T-cell (primary cell): ENCODE measurements at regions of chr11 and their contacts with region 1.

Region 1: GRCh38 chr11:128985880-128986279 is 43.2 kb upstream of the TP53AIP1 start:
- DNase-seq: no peak
- ATAC-seq: no peak
- H3K4me3 ChIP-seq: no peak overlapping the region
- H3K4me3 Mint-ChIP-seq: no peak overlapping the region
- H3K27ac ChIP-seq: no peak overlapping the region
- H3K27ac Mint-ChIP-seq: no peak overlapping the region
- H3K4me1 ChIP-seq: no peaks in the 10 kb centered on the region
- H3K4me1 Mint-ChIP-seq: peaks cover 0 to 4% (median 0%) of the 10 kb centered on the region in 3 donors
- H3K27me3 ChIP-seq: no peaks in the 10 kb centered on the region
- H3K27me3 Mint-ChIP-seq: no peaks in the 10 kb centered on the region

Region 2: GRCh38 chr11:127843483-127844396 is 1142.1 kb before region 1 on chr11:
- CTCF ChIA-PET with region 1: interaction called in 1 of 2 experiments, 13 read pairs
- POLR2A ChIA-PET with region 1: no interaction called
- DNase-seq: peak in 32 of 35 experiments; percentile 0 to 63 (median 24)
- ATAC-seq: peak in 1 of 4 experiments; percentile 45
- H3K4me3 ChIP-seq: no peak overlapping the region
- H3K4me3 Mint-ChIP-seq: no peak overlapping the region
- H3K27ac ChIP-seq: no peak overlapping the region
- H3K27ac Mint-ChIP-seq: no peak overlapping the region
- H3K4me1 ChIP-seq: no peaks in the 10 kb centered on the region
- H3K4me1 Mint-ChIP-seq: no peaks in the 10 kb centered on the region
- H3K27me3 ChIP-seq: peaks cover 0 to 7% of the 10 kb centered on the region in 2 experiments
- H3K27me3 Mint-ChIP-seq: peaks cover 11 to 13% of the 10 kb centered on the region in 2 donors

Region 3: GRCh38 chr11:128968916-128969315 is 17.0 kb before region 1 on chr11:
- CTCF ChIA-PET with region 1: no interaction called
- POLR2A ChIA-PET with region 1: no interaction called
- DNase-seq: no peak
- ATAC-seq: no peak
- H3K4me3 ChIP-seq: no peak overlapping the region
- H3K4me3 Mint-ChIP-seq: no peak overlapping the region
- H3K27ac ChIP-seq: no peak overlapping the region
- H3K27ac Mint-ChIP-seq: no peak overlapping the region
- H3K4me1 ChIP-seq: peaks cover 0 to 15% of the 10 kb centered on the region in 2 experiments
- H3K4me1 Mint-ChIP-seq: peaks cover 14 to 26% (median 20%) of the 10 kb centered on the region in 3 donors
- H3K27me3 ChIP-seq: peaks cover 0 to 7% of the 10 kb centered on the region in 2 experiments
- H3K27me3 Mint-ChIP-seq: no peaks in the 10 kb centered on the region

Region 4: GRCh38 chr11:129364143-129364654 is 378.3 kb after region 1 on chr11:
- CTCF ChIA-PET with region 1: no interaction called
- POLR2A ChIA-PET with region 1: no interaction called
- DNase-seq: peak; percentile 46 to 79 (median 64)
- ATAC-seq: peak; percentile 97 to 100 (median 100)
- H3K4me3 ChIP-seq: no peak overlapping the region
- H3K4me3 Mint-ChIP-seq: no peak overlapping the region
- H3K27ac ChIP-seq: no peak overlapping the region
- H3K27ac Mint-ChIP-seq: no peak overlapping the region
- H3K4me1 ChIP-seq: peaks cover 0 to 5% of the 10 kb centered on the region in 2 experiments
- H3K4me1 Mint-ChIP-seq: no peaks in the 10 kb centered on the region
- H3K27me3 ChIP-seq: peaks cover 5 to 14% of the 10 kb centered on the region in 2 experiments
- H3K27me3 Mint-ChIP-seq: peaks cover 39 to 40% of the 10 kb centered on the region in 2 donors